ENCODE measurements at regions of chr5 and their contacts with region 1.

Region 1: GRCh38 chr5:56598941-56599340 is 216.4 kb upstream of the MAP3K1 start:
- DNase-seq: no peak
- H3K4me3 ChIP-seq: no peak overlapping the region
- H3K4me3 Mint-ChIP-seq: no peak overlapping the region
- H3K27ac ChIP-seq: no peak overlapping the region
- H3K27ac Mint-ChIP-seq: no peak overlapping the region
- H3K4me1 ChIP-seq: no peaks in the 10 kb centered on the region
- H3K4me1 Mint-ChIP-seq: peaks cover 5 to 41% (median 13%) of the 10 kb centered on the region in 3 donors
- H3K27me3 ChIP-seq: no peaks in the 10 kb centered on the region
- H3K27me3 Mint-ChIP-seq: peaks cover 3 to 11% of the 10 kb centered on the region in 2 donors

Region 2: DNA sequence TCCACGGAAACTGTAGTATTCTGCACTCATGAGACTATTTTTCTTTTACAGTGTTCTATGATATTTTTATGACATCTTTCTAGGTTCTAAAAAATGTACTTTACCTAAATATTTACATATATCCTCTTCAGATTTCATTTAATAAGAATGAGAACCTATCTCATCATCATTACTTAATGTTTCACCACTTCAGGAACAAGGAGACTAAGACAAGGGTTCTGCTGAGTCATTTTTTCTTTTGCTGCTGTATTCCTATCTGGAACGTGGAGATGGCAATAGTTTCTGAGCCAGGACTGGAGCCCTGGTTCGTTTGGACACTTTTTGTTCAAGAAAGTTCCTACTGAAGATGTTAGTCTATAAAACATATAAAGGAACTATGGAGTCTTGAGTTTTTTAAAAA is 41.7 kb before region 1 on chr5:
- CTCF ChIA-PET with region 1: no interaction called
- POLR2A ChIA-PET with region 1: no interaction called
- DNase-seq: no peak
- H3K4me3 ChIP-seq: no peak overlapping the region
- H3K4me3 Mint-ChIP-seq: no peak overlapping the region
- H3K27ac ChIP-seq: no peak overlapping the region
- H3K27ac Mint-ChIP-seq: no peak overlapping the region
- H3K4me1 ChIP-seq: no peaks in the 10 kb centered on the region
- H3K4me1 Mint-ChIP-seq: peaks cover 0 to 16% (median 0%) of the 10 kb centered on the region in 3 donors
- H3K27me3 ChIP-seq: no peaks in the 10 kb centered on the region
- H3K27me3 Mint-ChIP-seq: peaks cover 4 to 24% of the 10 kb centered on the region in 2 donors

Region 3: DNA sequence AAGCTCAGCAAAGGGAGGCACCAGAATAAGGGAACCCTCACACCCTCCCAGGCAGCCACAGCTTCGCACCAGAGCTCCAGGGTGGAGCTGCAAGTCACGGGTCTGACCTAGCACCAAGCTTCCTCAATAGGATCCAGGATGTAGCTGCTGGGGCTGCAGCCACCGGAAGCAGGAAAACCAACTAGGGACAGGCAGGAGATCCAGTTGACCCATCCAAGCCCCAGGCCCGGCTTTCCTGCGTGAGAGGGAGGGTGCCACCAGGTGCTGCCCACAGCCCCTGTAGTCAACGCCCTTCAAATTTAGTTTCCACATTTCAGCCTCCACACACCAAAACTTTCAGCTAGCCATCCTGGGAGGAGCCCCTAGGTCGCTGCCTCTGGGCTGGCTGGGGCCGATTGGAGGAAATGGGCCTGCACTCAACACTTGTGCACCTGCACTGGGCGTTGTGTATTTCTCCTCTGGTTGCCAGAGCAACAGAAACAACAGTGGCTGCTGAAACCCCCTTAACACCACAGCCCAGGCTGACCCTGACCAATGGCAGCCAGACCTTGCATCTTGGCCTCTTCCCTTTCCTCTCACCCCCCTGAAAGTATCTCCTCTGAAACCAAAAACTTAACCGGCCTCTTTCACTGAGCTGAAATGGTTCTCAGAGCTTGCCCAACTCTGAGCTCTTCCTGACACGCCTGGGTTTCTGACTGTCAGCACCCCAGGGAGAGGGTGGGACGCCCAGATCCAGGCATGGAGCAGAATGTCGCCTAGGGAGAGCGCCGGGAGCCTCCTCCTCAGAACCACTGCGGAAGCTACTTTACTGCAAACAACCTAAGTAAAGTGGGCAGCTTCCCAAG is 10.1 kb before region 1 on chr5:
- CTCF ChIA-PET with region 1: no interaction called
- POLR2A ChIA-PET with region 1: interaction called, 20 read pairs
- DNase-seq: peak; percentile 16 to 80 (median 53)
- H3K4me3 ChIP-seq: peak overlapping the region; percentile 24
- H3K4me3 Mint-ChIP-seq: peak overlapping the region in 5 of 7 donors; percentile 2 to 71 (median 28)
- H3K27ac ChIP-seq: peak overlapping the region; percentile 45
- H3K27ac Mint-ChIP-seq: peak overlapping the region; percentile 67 to 97 (median 88)
- H3K4me1 ChIP-seq: peaks cover 49% of the 10 kb centered on the region
- H3K4me1 Mint-ChIP-seq: peaks cover 24 to 52% (median 34%) of the 10 kb centered on the region in 3 donors
- H3K27me3 ChIP-seq: no peaks in the 10 kb centered on the region
- H3K27me3 Mint-ChIP-seq: peaks cover 3 to 4% of the 10 kb centered on the region in 2 donors

Region 4: GRCh38 chr5:56640763-56641406 is 41.9 kb after region 1 on chr5:
- CTCF ChIA-PET with region 1: no interaction called
- POLR2A ChIA-PET with region 1: no interaction called
- DNase-seq: no peak
- H3K4me3 ChIP-seq: no peak overlapping the region
- H3K4me3 Mint-ChIP-seq: no peak overlapping the region
- H3K27ac ChIP-seq: no peak overlapping the region
- H3K27ac Mint-ChIP-seq: no peak overlapping the region
- H3K4me1 ChIP-seq: no peaks in the 10 kb centered on the region
- H3K4me1 Mint-ChIP-seq: no peaks in the 10 kb centered on the region
- H3K27me3 ChIP-seq: no peaks in the 10 kb centered on the region
- H3K27me3 Mint-ChIP-seq: peaks cover 5 to 38% of the 10 kb centered on the region in 2 donors

Measured in CD8-positive, alpha-beta memory T cell (primary cell).